AG04449 (cell line): ENCODE measurements at regions of chr11 and their contacts with region 1.

Region 1: DNA sequence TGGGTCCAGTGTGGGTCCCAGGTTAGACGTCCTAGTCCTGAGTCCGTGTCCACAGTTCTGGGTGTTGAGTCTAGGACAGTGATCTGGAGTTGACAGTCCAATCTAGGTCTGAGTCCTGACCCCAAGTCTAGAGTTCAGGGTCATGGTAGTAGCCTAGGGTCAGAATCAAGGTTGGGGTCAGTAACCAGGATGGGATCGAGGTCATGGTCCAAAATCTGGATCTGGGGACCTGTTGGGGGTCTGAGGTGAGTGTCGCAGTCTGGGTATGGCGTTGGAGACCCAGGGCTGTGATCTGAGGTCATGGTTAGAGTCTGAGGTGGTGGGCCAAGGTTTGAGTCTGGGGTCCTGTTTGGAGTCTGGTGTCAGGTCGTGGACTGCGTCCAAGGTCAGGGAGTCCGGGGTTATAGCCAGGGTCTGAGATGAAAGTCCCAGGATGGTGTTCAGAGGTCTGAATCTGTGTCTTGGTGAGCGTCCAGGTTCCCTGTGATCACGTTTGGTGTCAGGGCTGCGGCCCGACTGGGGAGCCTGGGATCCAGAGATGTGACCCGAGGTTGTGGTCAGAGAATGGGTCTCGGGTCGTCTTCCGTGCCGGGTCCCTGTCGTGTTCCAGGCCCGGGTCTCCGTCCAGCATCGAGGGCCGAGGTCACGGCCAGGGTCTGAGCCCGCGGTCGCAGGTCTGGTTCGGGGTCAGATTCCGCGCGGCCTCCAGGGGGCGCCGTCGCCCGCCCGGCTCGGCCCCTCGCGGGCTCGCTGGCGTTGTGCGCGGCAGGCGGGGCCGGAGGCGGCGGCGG is 445 bp upstream of the GRK2 start:
- DNase-seq: no peak
- H3K4me3 ChIP-seq: peak overlapping the region; percentile 53
- CTCF ChIP-seq: peak; percentile 73

Region 2: GRCh38 chr11:66915046-66915832 is 350.6 kb before region 1 on chr11:
- CTCF ChIA-PET with region 1: no interaction called
- POLR2A ChIA-PET with region 1: no interaction called
- DNase-seq: no peak
- H3K4me3 ChIP-seq: no peak overlapping the region
- CTCF ChIP-seq: no peak

Region 3: GRCh38 chr11:67245021-67245420 is 20.8 kb before region 1 on chr11:
- CTCF ChIA-PET with region 1: interaction called, 126 read pairs
- POLR2A ChIA-PET with region 1: interaction called, 4 read pairs
- DNase-seq: no peak
- H3K4me3 ChIP-seq: no peak overlapping the region
- CTCF ChIP-seq: no peak

Region 4: DNA sequence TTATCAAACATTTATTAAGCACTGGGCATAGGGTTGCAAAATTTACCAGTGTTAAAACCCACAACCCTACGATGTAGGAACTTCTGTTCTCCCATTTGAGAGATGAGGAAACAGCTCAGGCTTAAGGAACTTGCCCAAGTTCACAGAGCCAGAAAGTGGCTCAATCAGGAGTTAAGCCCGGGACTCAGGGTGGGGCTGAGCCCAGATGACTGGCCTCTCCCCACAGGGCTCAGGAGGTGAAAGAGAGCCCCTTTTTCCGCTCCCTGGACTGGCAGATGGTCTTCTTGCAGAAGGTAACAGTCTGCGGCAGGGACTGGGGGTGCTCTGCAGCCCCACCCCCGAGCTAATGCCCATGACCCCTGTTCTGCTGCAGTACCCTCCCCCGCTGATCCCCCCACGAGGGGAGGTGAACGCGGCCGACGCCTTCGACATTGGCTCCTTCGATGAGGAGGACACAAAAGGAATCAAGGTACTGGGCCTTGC is 17.7 kb after region 1 on chr11:
- CTCF ChIA-PET with region 1: interaction called, 48 read pairs
- POLR2A ChIA-PET with region 1: interaction called, 3 read pairs
- DNase-seq: no peak
- H3K4me3 ChIP-seq: no peak overlapping the region
- CTCF ChIP-seq: no peak

Region 5: DNA sequence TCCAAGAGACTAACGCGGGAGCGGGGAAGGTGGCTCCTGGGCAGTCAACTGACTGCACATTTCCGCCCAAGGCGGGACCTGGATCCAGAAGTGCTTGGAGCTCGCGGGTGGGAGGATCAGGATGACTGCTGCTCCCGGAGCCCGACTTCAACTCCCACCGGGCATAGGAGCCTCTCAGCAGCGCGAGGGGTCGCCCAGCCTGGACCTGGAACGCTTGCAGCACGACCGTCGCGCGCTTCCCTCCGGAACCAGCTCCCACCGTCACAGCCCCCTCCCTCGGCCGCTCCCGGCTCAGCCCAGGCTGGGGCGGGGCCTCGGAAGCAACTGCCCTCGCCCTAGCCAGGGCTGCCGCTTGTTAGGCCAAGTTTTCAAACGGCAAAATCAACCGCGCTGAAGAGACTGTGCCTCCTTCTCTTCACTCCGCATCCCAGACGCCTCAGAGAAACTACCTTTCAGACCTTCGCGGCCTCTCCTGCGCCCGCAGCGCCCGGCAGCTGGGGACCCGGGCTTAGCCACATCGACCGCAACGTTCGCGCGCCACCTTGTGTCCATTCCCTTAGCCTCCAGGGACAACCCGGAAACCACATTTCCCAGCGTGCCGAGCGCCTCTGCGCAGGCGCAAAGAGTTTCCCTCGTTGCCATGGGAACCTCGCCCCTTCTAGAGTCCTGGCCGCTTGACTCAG is 51.5 kb after region 1 on chr11:
- CTCF ChIA-PET with region 1: interaction called, 295 read pairs
- POLR2A ChIA-PET with region 1: interaction called, 9 read pairs
- DNase-seq: peak; percentile 53
- H3K4me3 ChIP-seq: peak overlapping the region; percentile 96
- CTCF ChIP-seq: peak; percentile 93

Region 6: DNA sequence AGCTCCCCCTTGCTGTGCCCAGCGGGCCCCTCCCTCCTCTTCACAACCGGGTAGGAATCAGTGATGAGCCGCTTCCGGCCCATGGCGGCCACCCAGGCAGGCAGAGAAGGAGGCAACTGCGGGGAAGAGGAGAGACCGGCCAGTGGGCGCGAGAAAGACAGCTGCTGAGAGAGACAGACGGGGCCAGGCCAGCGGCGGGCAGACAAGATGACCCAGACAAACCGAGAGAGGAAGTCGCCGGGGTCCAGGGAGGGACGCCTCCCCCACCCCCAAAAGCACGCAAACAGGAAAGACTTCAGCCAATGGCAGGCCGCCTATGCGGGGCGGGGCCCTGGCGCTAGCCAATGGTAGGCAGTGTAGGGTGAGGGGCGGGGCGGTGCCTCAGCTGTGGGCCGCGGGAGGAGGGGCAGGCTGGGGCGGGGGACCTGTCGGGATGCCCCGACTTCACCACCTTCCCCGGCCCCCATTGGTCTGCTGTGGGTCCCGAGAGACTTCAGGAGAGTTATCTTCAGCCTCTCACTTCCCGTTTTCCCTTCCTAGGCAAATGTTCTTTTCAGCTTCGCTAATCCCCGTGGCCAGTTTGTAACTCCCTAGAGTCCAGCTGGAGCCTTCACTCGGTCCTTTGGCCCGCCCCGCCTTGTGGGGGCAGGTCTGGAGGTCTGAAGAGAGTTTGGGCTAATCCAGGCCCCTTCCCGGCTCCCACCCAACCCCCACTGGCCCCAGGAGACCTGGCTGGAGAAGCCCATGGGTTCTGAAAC is 87.7 kb after region 1 on chr11 and contains the start of gene POLD4:
- CTCF ChIA-PET with region 1: interaction called, 67 read pairs
- POLR2A ChIA-PET with region 1: no interaction called
- DNase-seq: peak; percentile 77
- H3K4me3 ChIP-seq: peak within 1 kb of the TSS; percentile 92
- CTCF ChIP-seq: no peak

Region 7: DNA sequence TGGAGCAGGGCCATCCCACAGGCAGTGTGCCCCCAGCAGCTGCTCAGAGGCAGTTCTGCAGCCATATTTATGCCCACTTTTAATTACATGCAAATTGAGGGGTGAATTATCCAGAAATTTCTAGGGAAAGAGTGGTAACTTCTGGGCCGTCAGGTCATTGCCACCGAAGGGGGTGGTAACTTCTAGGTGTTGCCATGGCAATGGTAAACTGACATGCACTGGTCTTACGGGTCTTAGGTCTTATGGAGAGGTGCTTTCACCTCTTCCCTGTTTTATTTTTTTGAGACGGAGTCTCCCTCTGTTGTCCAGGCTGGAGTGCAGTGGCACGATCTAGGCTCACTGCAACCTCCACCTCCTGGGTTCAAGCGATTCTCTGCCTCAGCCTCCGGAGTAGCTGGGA is 207.1 kb after region 1 on chr11:
- CTCF ChIA-PET with region 1: no interaction called
- POLR2A ChIA-PET with region 1: no interaction called
- DNase-seq: no peak
- H3K4me3 ChIP-seq: no peak overlapping the region
- CTCF ChIP-seq: no peak